ENCODE measurements at regions of chr4 and their contacts with region 1.

Region 1: DNA sequence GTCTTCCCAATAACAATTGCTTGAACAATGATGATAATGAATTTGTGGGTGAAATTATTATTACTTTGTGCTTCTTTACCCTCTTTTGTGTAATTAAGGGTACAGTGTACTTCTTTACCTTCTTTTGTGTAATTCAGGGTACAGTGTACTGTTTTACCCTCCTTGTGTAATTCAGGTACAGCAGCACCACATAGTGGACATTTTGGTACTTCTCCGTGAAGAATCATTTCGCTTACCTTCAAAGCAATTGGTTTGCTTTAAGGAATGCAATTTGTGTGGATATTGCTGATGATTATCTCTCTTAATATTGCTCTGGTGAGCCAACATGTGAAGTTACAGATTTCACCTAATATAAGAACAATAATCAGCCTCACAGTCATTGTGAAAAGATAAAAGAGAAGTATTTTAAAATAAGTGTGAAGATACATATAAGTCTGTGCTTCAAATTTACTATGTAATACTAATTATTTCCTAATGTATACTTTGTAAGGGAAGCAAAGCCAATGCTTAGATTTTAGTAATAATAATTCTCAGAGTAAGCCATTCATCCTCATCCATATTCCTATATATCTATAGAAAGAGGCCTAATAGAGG is 27.2 kb upstream of the SEC24B start:
- DNase-seq: peak in 17 of 42 donors; percentile 13 to 69 (median 46)

Region 2: GRCh38 chr4:108834835-108835384 is 571.5 kb before region 1 on chr4:
- intact Hi-C with region 1: loop called (anchors 10 kb)
- DNase-seq: peak in 1 of 42 donors; percentile 21

Measured in head of caudate nucleus (tissue), 42 donors.